ENCODE measurements at regions of chr13 and their contacts with region 1.

Region 1: GRCh38 chr13:110340812-110341444 is 33.8 kb downstream of the COL4A2 start:
- DNase-seq: peak; percentile 93
- H3K4me3 Mint-ChIP-seq: peak overlapping the region; percentile 23
- H3K27ac Mint-ChIP-seq: peak overlapping the region; percentile 68
- H3K4me1 Mint-ChIP-seq: peaks cover 32% of the 10 kb centered on the region
- H3K27me3 Mint-ChIP-seq: peaks cover 14% of the 10 kb centered on the region

Region 2: GRCh38 chr13:109400209-109400608 is 940.7 kb before region 1 on chr13:
- CTCF ChIA-PET with region 1: no interaction called
- intact Hi-C with region 1: no loop called
- DNase-seq: no peak
- H3K4me3 Mint-ChIP-seq: no peak overlapping the region
- H3K27ac Mint-ChIP-seq: no peak overlapping the region
- H3K4me1 Mint-ChIP-seq: no peaks in the 10 kb centered on the region
- H3K27me3 Mint-ChIP-seq: peaks cover 9% of the 10 kb centered on the region

Region 3: DNA sequence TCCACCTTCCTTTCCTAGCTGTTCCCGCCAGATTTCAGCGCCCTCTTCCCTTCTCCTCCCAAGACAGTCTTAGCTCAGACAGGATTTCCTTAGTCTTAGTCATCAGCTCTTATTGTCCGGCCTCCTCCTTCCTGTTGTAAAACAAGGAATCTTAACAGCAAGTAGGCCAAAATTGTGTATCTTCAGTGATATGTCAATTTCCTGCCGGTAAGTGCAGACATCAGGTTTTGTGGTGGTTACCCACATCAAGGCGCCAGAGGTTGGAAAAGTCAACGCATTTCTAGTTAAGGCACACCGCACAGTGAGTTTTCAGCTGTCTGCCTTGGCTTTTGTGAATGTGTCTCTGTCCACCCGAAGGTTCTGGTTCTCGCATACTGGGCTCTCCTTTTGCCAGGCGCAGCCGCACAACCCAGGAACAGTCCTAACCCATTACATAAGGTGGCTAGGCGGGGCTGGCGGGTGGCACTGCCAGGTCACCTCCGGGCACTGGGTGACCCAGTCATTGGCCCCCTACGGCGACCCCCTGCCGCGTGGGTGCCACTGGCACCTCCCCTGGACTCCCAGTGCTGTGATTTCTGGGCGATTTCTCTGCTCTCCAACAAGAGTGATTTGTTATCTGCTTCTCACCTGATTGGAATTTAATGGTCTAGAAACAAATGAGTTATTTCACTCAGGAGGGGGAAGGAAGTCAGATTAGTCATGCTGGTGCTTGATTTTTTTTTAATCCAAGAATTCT is 21.0 kb before region 1 on chr13:
- CTCF ChIA-PET with region 1: interaction called, 4 read pairs
- intact Hi-C with region 1: loop called (anchors 1 kb)
- DNase-seq: peak; percentile 80
- H3K4me3 Mint-ChIP-seq: no peak overlapping the region
- H3K27ac Mint-ChIP-seq: peak overlapping the region; percentile 59
- H3K4me1 Mint-ChIP-seq: peaks cover 13% of the 10 kb centered on the region
- H3K27me3 Mint-ChIP-seq: peaks cover 34% of the 10 kb centered on the region

Region 4: GRCh38 chr13:110387391-110388107 is 46.6 kb after region 1 on chr13:
- CTCF ChIA-PET with region 1: no interaction called
- intact Hi-C with region 1: loop called (anchors 1 kb)
- DNase-seq: peak; percentile 69
- H3K4me3 Mint-ChIP-seq: peak overlapping the region; percentile 32
- H3K27ac Mint-ChIP-seq: no peak overlapping the region
- H3K4me1 Mint-ChIP-seq: peaks cover 12% of the 10 kb centered on the region
- H3K27me3 Mint-ChIP-seq: peaks cover 50% of the 10 kb centered on the region

Region 5: DNA sequence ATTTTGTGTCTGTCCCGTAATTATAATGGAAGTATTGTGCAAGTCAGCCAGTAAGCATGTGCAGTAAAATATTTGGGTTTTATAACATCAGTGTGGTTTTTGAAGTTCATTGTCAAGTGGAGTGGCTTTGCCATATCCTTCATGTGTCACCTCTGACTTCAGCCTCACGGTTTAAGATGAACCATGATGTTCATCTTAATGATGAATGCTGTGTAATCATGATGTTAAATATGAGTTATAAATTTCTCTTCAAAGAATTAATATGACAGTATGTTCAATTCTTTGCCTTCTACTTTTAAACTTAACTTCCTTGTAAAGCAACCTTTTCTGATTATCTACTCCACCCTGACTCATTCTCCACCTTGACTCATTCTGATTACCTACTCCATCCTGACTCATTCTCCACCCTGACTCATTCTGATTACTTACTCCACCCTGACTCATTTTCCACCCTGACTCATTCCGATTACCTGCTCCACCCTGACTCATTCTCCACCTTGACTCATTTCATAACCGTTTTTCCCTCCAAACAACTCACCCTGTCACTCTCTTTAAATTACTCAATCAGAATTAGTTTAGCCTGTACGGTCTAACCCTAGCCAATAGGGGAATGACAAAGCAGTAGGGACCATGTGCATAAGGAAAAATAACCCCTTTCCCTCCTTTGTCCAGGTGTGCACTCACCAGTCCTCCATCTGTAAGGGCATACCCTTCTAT is 624.3 kb after region 1 on chr13:
- CTCF ChIA-PET with region 1: no interaction called
- intact Hi-C with region 1: loop called (anchors 2 kb)
- DNase-seq: peak; percentile 56
- H3K4me3 Mint-ChIP-seq: no peak overlapping the region
- H3K27ac Mint-ChIP-seq: peak overlapping the region; percentile 75
- H3K4me1 Mint-ChIP-seq: peaks cover 16% of the 10 kb centered on the region
- H3K27me3 Mint-ChIP-seq: peaks cover 26% of the 10 kb centered on the region

Measured in activated naive CD4-positive, alpha-beta T cell treated with anti-CD3 and anti-CD28 coated beads for 36 hours (primary cell).